ENCODE measurements at regions of chr13 and their contacts with region 1.

Region 1: GRCh38 chr13:114128624-114129522 is 3.5 kb downstream of the RASA3 start:
- DNase-seq: peak; percentile 93

Region 2: GRCh38 chr13:113848431-113849260 is 280.2 kb before region 1 on chr13:
- intact Hi-C with region 1: loop called (anchors 10 kb)
- DNase-seq: peak; percentile 68

Region 3: DNA sequence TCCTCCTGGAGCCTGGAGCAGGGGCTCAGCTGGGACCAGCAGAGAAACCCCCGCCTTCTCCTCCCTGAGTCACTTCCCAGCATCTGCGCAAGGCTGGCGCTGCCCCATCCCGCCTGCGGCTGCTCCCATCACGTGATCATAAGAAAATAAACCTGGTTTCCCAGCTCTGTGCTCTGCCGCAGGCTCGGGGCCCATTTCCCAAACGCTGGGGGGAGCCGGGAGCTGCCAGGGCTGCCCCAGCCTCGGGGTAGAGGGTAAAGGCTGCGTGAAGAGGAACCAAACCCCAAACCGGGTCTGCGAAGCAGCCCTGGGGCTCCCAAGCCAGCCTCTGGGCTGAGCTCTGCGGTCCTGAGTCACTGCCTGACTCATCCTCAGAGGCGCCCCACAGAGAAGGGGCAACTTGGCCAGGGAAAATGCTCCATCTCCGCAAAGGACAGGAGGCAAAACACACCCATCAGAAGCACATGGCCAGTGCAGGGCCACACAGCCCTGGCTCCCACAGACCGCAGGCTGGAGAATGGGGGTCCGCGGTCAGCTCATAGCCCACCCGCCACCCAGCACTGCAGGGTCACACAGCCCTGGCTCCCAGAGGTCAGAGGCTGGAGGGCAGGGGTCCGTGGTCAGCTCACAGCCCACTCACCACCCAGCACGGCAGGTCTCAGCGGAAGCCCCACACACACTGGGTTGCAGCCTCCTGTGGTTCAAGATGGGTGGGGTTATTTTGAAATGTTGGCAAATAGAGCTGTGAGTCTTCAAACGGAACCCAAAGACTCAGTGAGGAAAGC is 63.5 kb before region 1 on chr13:
- intact Hi-C with region 1: loop called (anchors 2 kb)
- DNase-seq: peak; percentile 93

Measured in cardiac septum (tissue), 1 donor.